Sigmoid colon (tissue), 7 donors: ENCODE measurements at regions of chr11 and their contacts with region 1.

Region 1: DNA sequence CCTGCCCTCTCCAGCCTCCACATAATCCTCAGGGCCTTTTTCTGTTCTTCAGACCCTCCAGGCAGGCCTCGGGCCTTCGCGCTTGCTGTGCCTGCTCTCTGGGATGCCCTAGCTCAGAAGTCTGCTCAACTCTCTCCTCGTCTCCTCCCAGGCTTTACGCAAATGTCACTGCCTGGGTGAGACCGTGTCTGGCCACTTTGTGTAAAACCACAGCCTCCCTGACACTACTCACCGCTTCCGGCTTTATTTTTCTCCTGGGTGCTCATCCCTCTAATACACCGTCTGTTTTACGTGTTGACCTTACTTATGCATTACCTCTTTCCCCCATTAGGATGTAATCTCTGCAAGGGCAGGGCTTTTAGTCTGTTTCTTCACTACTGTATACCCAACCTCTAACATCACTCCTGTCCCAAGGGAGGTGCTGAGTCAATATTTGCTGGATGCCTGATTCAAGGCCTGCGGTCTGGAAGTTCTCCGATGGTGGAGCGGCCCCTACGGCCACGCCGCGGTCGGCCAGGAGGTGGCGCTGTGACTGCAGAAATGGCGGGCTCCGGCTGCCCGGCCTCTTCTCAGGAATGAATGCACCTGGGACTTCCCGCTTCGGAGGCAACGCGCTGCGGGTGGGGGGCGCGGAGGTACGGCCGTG is 58.2 kb upstream of the THY1 start:
- DNase-seq: peak; percentile 90
- H3K4me3 ChIP-seq: no peak overlapping the region
- H3K27ac ChIP-seq: no peak overlapping the region
- H3K4me1 ChIP-seq: peaks cover 0 to 5% (median 2%) of the 10 kb centered on the region in 4 donors
- H3K27me3 ChIP-seq: no peaks in the 10 kb centered on the region
- CTCF ChIP-seq: peak; percentile 74 to 95 (median 92)
- EP300 ChIP-seq: no peak
- POLR2A ChIP-seq: no peak

Region 2: DNA sequence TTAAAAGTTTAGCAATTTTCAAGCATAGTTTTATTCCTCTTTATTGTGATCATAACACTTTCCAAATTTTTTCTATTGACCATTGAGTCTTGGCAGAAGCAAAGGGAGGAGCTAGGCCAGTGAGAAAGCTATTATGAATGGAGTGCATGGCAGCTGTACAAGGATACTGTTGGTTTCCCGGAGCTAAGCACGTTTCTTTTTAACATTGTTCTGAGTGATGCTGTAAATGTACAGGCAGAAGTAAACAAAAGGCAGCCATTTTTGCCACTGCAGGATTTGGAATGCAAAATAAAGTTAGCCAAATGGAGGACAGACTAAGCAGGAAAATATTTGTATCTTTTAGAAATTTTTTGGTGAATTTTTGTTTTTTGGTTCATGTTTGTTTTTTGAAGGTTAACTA is 258.8 kb before region 1 on chr11:
- intact Hi-C with region 1: no loop called
- DNase-seq: no peak
- H3K4me3 ChIP-seq: no peak overlapping the region
- H3K27ac ChIP-seq: peak overlapping the region in 3 of 4 donors; percentile 15 to 60 (median 36)
- H3K4me1 ChIP-seq: peaks cover 0 to 15% (median 13%) of the 10 kb centered on the region in 4 donors
- H3K27me3 ChIP-seq: no peaks in the 10 kb centered on the region
- CTCF ChIP-seq: no peak
- EP300 ChIP-seq: no peak
- POLR2A ChIP-seq: no peak

Region 3: GRCh38 chr11:119533921-119534736 is 53.0 kb after region 1 on chr11:
- intact Hi-C with region 1: loop called (anchors 1 kb)
- DNase-seq: peak; percentile 83
- H3K4me3 ChIP-seq: no peak overlapping the region
- H3K27ac ChIP-seq: no peak overlapping the region
- H3K4me1 ChIP-seq: no peaks in the 10 kb centered on the region
- H3K27me3 ChIP-seq: peaks cover 0 to 3% (median 0%) of the 10 kb centered on the region in 3 donors
- CTCF ChIP-seq: peak in 3 of 4 experiments; percentile 62 to 72 (median 66)
- EP300 ChIP-seq: no peak
- POLR2A ChIP-seq: no peak

Region 4: GRCh38 chr11:120108154-120108865 is 627.2 kb after region 1 on chr11:
- intact Hi-C with region 1: loop called (anchors 2 kb)
- DNase-seq: peak; percentile 77
- H3K4me3 ChIP-seq: no peak overlapping the region
- H3K27ac ChIP-seq: no peak overlapping the region
- H3K4me1 ChIP-seq: no peaks in the 10 kb centered on the region
- H3K27me3 ChIP-seq: peaks cover 0 to 10% (median 0%) of the 10 kb centered on the region in 3 donors
- CTCF ChIP-seq: peak; percentile 85 to 100 (median 98)
- EP300 ChIP-seq: no peak
- POLR2A ChIP-seq: no peak